ENCODE measurements at regions of chr11 and their contacts with region 1.

Region 1: DNA sequence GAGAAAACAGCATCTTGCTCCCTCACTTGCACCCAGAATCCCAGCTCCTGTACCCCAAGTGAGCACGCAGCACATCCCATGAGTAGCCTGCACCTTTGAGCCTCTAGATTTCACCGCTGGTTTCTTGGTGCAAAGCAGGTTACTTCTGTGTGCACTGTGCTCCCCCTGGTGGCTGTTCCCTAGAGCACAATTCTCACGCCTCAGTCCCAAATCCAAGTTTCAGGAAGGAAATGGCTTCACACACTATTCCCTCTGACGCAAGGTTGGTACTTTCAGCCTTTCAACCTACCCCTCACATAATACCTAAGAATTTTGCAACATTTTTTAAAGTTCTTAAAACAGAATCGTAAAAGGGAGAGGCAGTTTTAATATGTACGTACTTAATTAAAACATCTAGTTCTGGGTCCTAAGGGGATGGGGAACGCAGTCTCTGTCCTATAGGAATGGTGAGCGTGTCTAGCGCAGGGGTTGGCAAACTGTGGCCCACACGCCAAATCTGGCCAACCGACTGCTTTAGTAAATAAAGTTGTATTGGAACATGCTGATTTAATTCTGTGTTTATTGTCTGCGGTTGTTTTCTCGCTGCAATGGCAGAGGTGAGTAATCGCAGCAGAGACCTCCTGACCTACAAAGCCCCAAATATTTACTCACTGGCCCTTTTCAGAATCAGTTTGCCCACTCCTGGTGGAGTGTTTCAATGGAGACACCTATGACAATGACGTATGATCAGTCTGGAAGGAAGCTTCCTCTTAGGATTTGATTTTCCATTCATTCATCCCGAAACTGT is 27.5 kb downstream of the DHCR7 start:
- DNase-seq: no peak
- ATAC-seq: no peak
- H3K4me3 ChIP-seq: no peak overlapping the region
- H3K27ac ChIP-seq: no peak overlapping the region
- H3K4me1 ChIP-seq: no peaks in the 10 kb centered on the region
- H3K27me3 ChIP-seq: peaks cover 0 to 6% (median 0%) of the 10 kb centered on the region in 3 donors
- CTCF ChIP-seq: peak; percentile 57

Region 2: DNA sequence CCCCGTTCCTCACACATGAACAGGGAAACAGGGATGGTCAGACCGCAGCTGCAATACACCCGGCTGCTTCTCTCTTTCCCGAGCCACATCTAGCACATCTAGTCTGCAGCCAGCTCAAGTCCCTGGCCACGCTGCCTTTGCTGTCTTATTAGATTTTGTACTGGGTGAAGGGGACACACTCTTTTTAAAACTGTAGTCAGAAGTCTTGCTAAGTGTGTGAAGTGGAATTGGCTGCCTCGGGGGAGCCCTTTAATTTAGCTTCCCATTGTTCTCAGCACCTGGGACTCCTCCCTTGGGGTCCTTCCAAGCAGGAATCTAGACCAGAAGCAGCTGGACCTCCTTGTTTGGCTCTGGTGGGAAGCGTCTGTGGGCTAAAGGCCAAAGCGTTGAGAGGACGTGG is 602.3 kb before region 1 on chr11:
- intact Hi-C with region 1: loop called in 1 of 2 experiments (anchors 10 kb)
- DNase-seq: no peak
- ATAC-seq: no peak
- H3K4me3 ChIP-seq: no peak overlapping the region
- H3K27ac ChIP-seq: no peak overlapping the region
- H3K4me1 ChIP-seq: no peaks in the 10 kb centered on the region
- H3K27me3 ChIP-seq: peaks cover 0 to 17% (median 6%) of the 10 kb centered on the region in 3 donors
- CTCF ChIP-seq: no peak

Region 3: GRCh38 chr11:71206186-71206585 is 214.5 kb before region 1 on chr11:
- intact Hi-C with region 1: no loop called
- DNase-seq: peak in 1 of 2 donors; percentile 20
- ATAC-seq: no peak
- H3K4me3 ChIP-seq: no peak overlapping the region
- H3K27ac ChIP-seq: no peak overlapping the region
- H3K4me1 ChIP-seq: no peaks in the 10 kb centered on the region
- H3K27me3 ChIP-seq: peaks cover 0 to 11% (median 0%) of the 10 kb centered on the region in 3 donors
- CTCF ChIP-seq: no peak

Region 4: GRCh38 chr11:71372693-71373657 is 47.7 kb before region 1 on chr11:
- intact Hi-C with region 1: no loop called
- DNase-seq: no peak
- ATAC-seq: no peak
- H3K4me3 ChIP-seq: no peak overlapping the region
- H3K27ac ChIP-seq: no peak overlapping the region
- H3K4me1 ChIP-seq: no peaks in the 10 kb centered on the region
- H3K27me3 ChIP-seq: peaks cover 0 to 3% (median 2%) of the 10 kb centered on the region in 3 donors
- CTCF ChIP-seq: peak; percentile 14

Region 5: DNA sequence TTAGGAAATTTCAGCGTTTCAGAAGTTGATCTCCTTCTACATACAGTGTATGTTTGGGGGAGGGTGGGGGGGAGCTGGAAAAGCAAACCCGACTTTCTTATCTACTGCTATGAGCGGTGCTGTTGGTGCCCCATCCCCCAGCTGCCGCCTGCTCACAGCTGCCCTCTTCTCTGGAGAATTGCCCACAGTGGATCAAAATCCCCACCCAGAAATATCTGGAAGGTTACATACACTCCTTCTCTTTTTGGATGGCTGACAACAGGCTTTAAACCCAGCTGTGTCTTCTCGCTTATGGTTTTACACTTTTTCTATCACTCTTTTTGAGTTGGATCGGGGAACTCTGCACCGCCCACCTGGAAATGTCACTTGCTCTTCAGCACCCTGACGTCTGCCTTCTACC is 28.9 kb before region 1 on chr11:
- intact Hi-C with region 1: no loop called
- DNase-seq: no peak
- ATAC-seq: no peak
- H3K4me3 ChIP-seq: no peak overlapping the region
- H3K27ac ChIP-seq: no peak overlapping the region
- H3K4me1 ChIP-seq: no peaks in the 10 kb centered on the region
- H3K27me3 ChIP-seq: peaks cover 0 to 28% (median 10%) of the 10 kb centered on the region in 3 donors
- CTCF ChIP-seq: no peak

Measured in psoas muscle (tissue), 8 donors.